H1 (cell line): ENCODE measurements at regions of chr11 and their contacts with region 1.

Region 1: GRCh38 chr11:116879800-116880625 is 42.6 kb upstream of the APOA1 start:
- DNase-seq: no peak
- H3K4me3 ChIP-seq: no peak overlapping the region
- H3K27ac ChIP-seq: no peak overlapping the region
- H3K4me1 ChIP-seq: no peaks in the 10 kb centered on the region
- H3K27me3 ChIP-seq: no peaks in the 10 kb centered on the region
- CTCF ChIP-seq: peak in 2 of 3 experiments; percentile 63 to 78; a peak in 3 of 4 replicates
- EP300 ChIP-seq: no peak
- POLR2A ChIP-seq: no peak
- RAD21 ChIP-seq: peak; percentile 74 to 76

Region 2: DNA sequence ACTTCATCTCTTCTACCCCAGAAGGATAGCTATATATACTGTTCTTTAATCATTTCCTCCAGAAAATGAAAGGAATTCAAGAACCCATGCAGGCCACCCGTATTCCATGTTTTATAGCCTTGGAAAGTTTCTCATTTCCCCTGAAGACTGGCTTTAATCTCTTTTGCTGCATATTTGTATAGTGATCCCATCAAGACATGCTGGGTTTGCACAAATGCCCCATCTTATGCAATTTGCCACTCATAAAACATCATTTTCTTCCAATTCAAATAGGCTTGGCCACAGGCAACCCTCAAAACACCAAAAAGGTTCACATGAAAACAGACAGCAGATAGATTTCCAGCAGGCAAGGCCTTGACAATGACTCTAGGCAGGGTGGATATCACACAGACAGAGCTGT is 14.3 kb before region 1 on chr11:
- CTCF ChIA-PET with region 1: interaction called, 37 read pairs
- POLR2A ChIA-PET with region 1: interaction called, 3 read pairs
- DNase-seq: no peak
- H3K4me3 ChIP-seq: no peak overlapping the region
- H3K27ac ChIP-seq: no peak overlapping the region
- H3K4me1 ChIP-seq: no peaks in the 10 kb centered on the region
- H3K27me3 ChIP-seq: no peaks in the 10 kb centered on the region
- CTCF ChIP-seq: no peak
- EP300 ChIP-seq: no peak
- POLR2A ChIP-seq: no peak
- RAD21 ChIP-seq: no peak

Region 3: DNA sequence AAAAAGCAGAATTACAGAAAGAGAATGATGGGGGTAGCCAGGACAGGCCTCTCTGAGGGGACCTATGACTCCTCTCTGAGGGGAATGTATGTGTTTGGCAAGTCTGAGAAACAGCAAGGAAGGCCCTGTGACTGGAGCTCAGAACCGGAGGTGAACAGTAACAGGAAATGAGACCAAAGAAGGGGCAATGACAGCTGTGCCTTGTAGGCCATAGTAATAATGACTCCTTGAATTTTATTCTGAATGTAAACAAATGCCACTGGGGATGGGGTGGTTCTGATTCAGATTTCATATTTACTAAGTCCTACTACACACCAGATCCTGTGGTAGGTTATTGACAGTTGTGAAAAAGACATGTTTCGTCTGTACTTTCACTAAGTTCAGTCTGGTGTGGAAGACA is 10.2 kb after region 1 on chr11:
- CTCF ChIA-PET with region 1: interaction called, 14 read pairs
- POLR2A ChIA-PET with region 1: no interaction called
- DNase-seq: no peak
- H3K4me3 ChIP-seq: no peak overlapping the region
- H3K27ac ChIP-seq: no peak overlapping the region
- H3K4me1 ChIP-seq: no peaks in the 10 kb centered on the region
- H3K27me3 ChIP-seq: no peaks in the 10 kb centered on the region
- CTCF ChIP-seq: no peak
- EP300 ChIP-seq: no peak
- POLR2A ChIP-seq: no peak
- RAD21 ChIP-seq: no peak